K562 (cell line): ENCODE measurements at regions of chr5 and their contacts with region 1.

Region 1: GRCh38 chr5:150161242-150162141 is 5.1 kb upstream of the CDX1 start:
- DNase-seq: peak; percentile 86 to 87 (median 86)
- ATAC-seq: peak; percentile 96
- H3K4me3 ChIP-seq: peak overlapping the region; percentile 22; the same call in 1 of the 2 replicates
- H3K27ac ChIP-seq: no peak overlapping the region; the same call in 2 of the 3 replicates
- H3K4me1 ChIP-seq: peaks cover 19 to 22% of the 10 kb centered on the region in 2 experiments; a peak in 4 of 5 replicates
- H3K27me3 ChIP-seq: peaks cover 0 to 8% of the 10 kb centered on the region in 2 experiments; a peak in 1 of 5 replicates
- CTCF ChIP-seq: peak; percentile 86 to 98 (median 95)
- EP300 ChIP-seq: no peak
- POLR2A ChIP-seq: no peak
- RAD21 ChIP-seq: peak; percentile 51 to 81

Region 2: DNA sequence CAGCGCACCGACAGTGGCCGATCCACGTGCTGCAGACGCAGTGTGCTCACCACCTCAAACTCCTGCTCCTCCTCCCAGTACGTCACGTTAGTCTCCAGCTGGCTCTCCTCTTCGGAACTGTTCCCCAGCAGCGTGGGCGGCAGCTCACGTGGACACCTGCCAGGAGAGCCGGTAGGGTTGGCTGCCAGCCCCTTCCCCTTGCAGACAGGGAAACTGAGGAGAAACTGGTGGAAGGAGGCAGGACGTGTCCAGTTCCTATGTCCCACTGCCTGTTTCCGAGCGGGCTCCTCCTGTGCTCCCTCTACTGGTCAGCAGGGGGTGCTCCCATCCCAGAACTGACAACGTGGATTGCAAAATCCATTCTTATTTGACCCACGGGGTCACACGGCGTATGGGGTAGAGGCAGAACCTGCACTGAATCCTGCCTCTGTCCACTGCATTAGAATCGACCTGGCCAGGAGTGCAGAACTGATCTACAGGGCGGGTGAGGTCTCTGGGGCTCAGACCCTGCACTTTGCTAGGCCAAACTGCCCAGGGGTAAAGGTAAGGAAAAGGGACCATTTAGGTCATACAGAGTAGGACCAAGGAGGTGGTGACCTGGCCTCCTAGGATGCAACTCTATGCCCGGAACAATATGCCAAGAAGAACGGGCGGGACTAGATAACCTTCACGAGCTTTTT is 31.5 kb before region 1 on chr5:
- CTCF ChIA-PET with region 1: interaction called, 6 read pairs
- POLR2A ChIA-PET with region 1: no interaction called
- in situ Hi-C with region 1: no loop called
- intact Hi-C with region 1: loop called (anchors 2 kb)
- DNase-seq: peak; percentile 82 to 91 (median 89)
- ATAC-seq: peak; percentile 93
- H3K4me3 ChIP-seq: peak overlapping the region; percentile 14; the same call in 1 of the 2 replicates
- H3K27ac ChIP-seq: no peak overlapping the region
- H3K4me1 ChIP-seq: peaks cover 8 to 11% of the 10 kb centered on the region in 2 experiments; a peak in 4 of 5 replicates
- H3K27me3 ChIP-seq: peaks cover 5 to 20% of the 10 kb centered on the region in 2 experiments; a peak in 4 of 5 replicates
- CTCF ChIP-seq: peak; percentile 87 to 98 (median 97)
- EP300 ChIP-seq: no peak
- POLR2A ChIP-seq: no peak
- RAD21 ChIP-seq: peak; percentile 97

Region 3: GRCh38 chr5:150175076-150175935 is 13.8 kb after region 1 on chr5:
- CTCF ChIA-PET with region 1: interaction called, 5 read pairs
- POLR2A ChIA-PET with region 1: interaction called, 3 read pairs
- in situ Hi-C with region 1: no loop called
- intact Hi-C with region 1: loop called (anchors 1 kb)
- DNase-seq: peak; percentile 67 to 77 (median 76)
- ATAC-seq: peak; percentile 96
- H3K4me3 ChIP-seq: no peak overlapping the region
- H3K27ac ChIP-seq: no peak overlapping the region
- H3K4me1 ChIP-seq: peaks cover 0 to 2% of the 10 kb centered on the region in 2 experiments; a peak in 2 of 5 replicates
- H3K27me3 ChIP-seq: peaks cover 22 to 52% of the 10 kb centered on the region in 2 experiments
- CTCF ChIP-seq: peak; percentile 70 to 75 (median 72)
- EP300 ChIP-seq: no peak
- POLR2A ChIP-seq: no peak
- RAD21 ChIP-seq: peak; percentile 47 to 57; a peak in 3 of 4 replicates

Region 4: GRCh38 chr5:150217873-150218692 is 56.6 kb after region 1 on chr5:
- CTCF ChIA-PET with region 1: interaction called, 25 read pairs
- POLR2A ChIA-PET with region 1: no interaction called
- in situ Hi-C with region 1: no loop called
- intact Hi-C with region 1: loop called (anchors 1 kb)
- DNase-seq: peak; percentile 82 to 89 (median 88)
- ATAC-seq: peak; percentile 97
- H3K4me3 ChIP-seq: no peak overlapping the region
- H3K27ac ChIP-seq: no peak overlapping the region
- H3K4me1 ChIP-seq: peaks cover 3 to 4% of the 10 kb centered on the region in 2 experiments; a peak in 3 of 5 replicates
- H3K27me3 ChIP-seq: peaks cover 13 to 34% of the 10 kb centered on the region in 2 experiments; a peak in 4 of 5 replicates
- CTCF ChIP-seq: peak; percentile 89 to 94 (median 90)
- EP300 ChIP-seq: no peak
- POLR2A ChIP-seq: no peak
- RAD21 ChIP-seq: peak; percentile 96

Region 5: GRCh38 chr5:150256410-150257064 is 95.0 kb after region 1 on chr5:
- CTCF ChIA-PET with region 1: no interaction called
- POLR2A ChIA-PET with region 1: no interaction called
- in situ Hi-C with region 1: no loop called
- intact Hi-C with region 1: loop called (anchors 1 kb)
- DNase-seq: peak; percentile 28 to 49 (median 46)
- ATAC-seq: peak; percentile 79
- H3K4me3 ChIP-seq: no peak overlapping the region
- H3K27ac ChIP-seq: no peak overlapping the region
- H3K4me1 ChIP-seq: no peaks in the 10 kb centered on the region
- H3K27me3 ChIP-seq: peaks cover 12 to 42% of the 10 kb centered on the region in 2 experiments
- CTCF ChIP-seq: peak; percentile 50 to 55 (median 51); a peak in 4 of 6 replicates
- EP300 ChIP-seq: no peak
- POLR2A ChIP-seq: no peak
- RAD21 ChIP-seq: peak; percentile 35 to 58; a peak in 3 of 4 replicates

Region 6: DNA sequence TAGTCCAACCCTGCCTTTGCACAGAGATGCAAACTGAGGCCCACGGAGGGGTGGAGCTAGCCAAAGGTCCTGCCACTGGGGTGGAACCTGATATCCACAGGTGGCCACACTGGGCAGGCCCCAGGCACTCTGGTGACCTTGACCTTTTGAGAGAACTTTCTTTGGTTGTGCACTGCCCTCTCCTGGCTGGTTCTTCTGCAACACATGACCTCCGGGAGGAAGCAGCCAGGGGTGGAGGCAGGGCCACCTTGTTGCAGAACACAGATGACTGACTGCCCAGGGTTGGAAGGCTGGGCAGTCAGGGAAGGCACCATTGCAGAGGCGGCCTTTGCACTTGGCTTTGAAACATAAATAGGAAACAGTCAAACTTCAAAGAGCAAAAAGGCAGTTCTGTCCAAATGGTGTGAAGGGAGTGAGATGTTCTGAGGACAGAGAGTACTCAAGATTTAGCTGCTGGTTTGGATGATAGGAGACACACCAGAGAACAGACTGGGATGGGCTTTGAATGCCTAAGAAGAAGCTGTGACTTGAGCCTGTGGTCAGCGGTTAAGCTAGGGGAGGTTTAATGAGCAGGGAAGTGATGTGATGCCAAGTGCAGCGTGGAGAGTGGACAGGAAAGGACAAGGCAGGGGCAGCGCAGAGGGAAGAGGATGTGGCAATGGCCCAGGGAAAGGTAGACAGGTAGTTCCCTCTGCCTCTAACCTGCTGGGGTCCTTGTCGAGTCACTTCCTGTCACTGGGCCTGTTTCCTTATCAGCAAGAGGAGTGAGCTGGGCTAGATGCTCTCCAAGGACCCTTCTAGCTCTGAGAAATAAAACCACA is 189.2 kb after region 1 on chr5:
- CTCF ChIA-PET with region 1: interaction called, 17 read pairs
- POLR2A ChIA-PET with region 1: no interaction called
- in situ Hi-C with region 1: no loop called
- intact Hi-C with region 1: loop called (anchors 1 kb)
- DNase-seq: peak; percentile 80 to 84 (median 82)
- ATAC-seq: peak; percentile 99
- H3K4me3 ChIP-seq: no peak overlapping the region
- H3K27ac ChIP-seq: no peak overlapping the region
- H3K4me1 ChIP-seq: no peaks in the 10 kb centered on the region; a peak in 1 of 5 replicates
- H3K27me3 ChIP-seq: peaks cover 9 to 18% of the 10 kb centered on the region in 2 experiments; a peak in 4 of 5 replicates
- CTCF ChIP-seq: peak; percentile 86 to 90 (median 87)
- EP300 ChIP-seq: no peak
- POLR2A ChIP-seq: no peak
- RAD21 ChIP-seq: peak; percentile 94 to 96

Region 7: DNA sequence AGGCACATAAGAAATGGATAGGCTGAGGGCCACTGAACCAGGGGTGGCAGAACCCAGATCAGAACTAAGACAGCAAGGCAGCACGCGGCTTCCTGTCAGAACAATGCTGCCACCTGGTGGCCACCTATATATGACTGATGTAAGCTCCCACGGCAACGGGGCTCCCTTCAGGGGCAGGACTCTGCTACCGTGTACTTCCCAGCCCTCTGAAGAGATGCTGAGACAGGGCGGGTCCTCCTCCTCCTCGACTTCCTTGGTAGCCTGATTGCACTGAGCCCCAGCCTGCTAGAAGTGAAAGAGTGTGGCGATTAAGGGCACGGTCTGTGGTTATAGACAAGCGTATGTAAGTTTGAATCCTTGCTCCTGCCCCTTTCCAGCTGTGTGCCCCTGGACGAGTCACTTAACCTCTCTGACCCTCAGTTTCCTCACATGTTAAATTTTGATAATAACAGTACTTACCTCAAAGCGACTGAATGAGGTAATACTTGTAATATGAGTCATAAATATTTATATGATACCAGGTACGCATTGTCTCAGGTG is 274.7 kb after region 1 on chr5:
- CTCF ChIA-PET with region 1: interaction called, 16 read pairs
- POLR2A ChIA-PET with region 1: no interaction called
- in situ Hi-C with region 1: no loop called
- intact Hi-C with region 1: loop called (anchors 1 kb)
- DNase-seq: peak; percentile 88 to 91 (median 90)
- ATAC-seq: peak; percentile 95
- H3K4me3 ChIP-seq: no peak overlapping the region
- H3K27ac ChIP-seq: no peak overlapping the region
- H3K4me1 ChIP-seq: peaks cover 0 to 6% of the 10 kb centered on the region in 2 experiments; a peak in 3 of 5 replicates
- H3K27me3 ChIP-seq: peaks cover 0 to 6% of the 10 kb centered on the region in 2 experiments; a peak in 3 of 5 replicates
- CTCF ChIP-seq: peak; percentile 86 to 90 (median 89)
- EP300 ChIP-seq: no peak
- POLR2A ChIP-seq: no peak
- RAD21 ChIP-seq: peak; percentile 83 to 91